ENCODE measurements at regions of chr4 and their contacts with region 1.

Region 1: GRCh38 chr4:185396724-185397402 is at the start of gene ANKRD37:
- DNase-seq: no peak
- H3K4me3 ChIP-seq: peak within 1 kb of the TSS; percentile 63 to 81 (median 81)
- H3K4me3 Mint-ChIP-seq: peak within 1 kb of the TSS; percentile 77 to 93
- H3K27ac ChIP-seq: peak within 1 kb of the TSS; percentile 88 to 96
- H3K27ac Mint-ChIP-seq: peak within 1 kb of the TSS; percentile 82 to 96 (median 94)
- H3K4me1 ChIP-seq: peaks cover 17 to 19% of the 10 kb centered on the region in 2 donors
- H3K4me1 Mint-ChIP-seq: peaks cover 18% of the 10 kb centered on the region
- H3K27me3 ChIP-seq: peaks cover 0 to 8% of the 10 kb centered on the region in 2 donors
- H3K27me3 Mint-ChIP-seq: peaks cover 11 to 13% (median 12%) of the 10 kb centered on the region in 3 donors
- CTCF ChIP-seq: no peak
- polyA plus RNA-seq, gene ANKRD37: 4.2 to 6.5 (median 5.4) TPM

Region 2: GRCh38 chr4:185425647-185426352 is 28.9 kb after region 1 on chr4 and contains the start of gene UFSP2:
- intact Hi-C with region 1: loop called in 1 of 2 experiments (anchors 1 kb)
- DNase-seq: peak; percentile 86 to 95 (median 93)
- H3K4me3 ChIP-seq: peak within 1 kb of the TSS; percentile 80 to 89 (median 80)
- H3K4me3 Mint-ChIP-seq: peak within 1 kb of the TSS; percentile 94 to 96
- H3K27ac ChIP-seq: peak within 1 kb of the TSS; percentile 65 to 97
- H3K27ac Mint-ChIP-seq: peak within 1 kb of the TSS; percentile 98 to 99 (median 99)
- H3K4me1 ChIP-seq: peaks cover 11 to 15% of the 10 kb centered on the region in 2 donors
- H3K4me1 Mint-ChIP-seq: peaks cover 16% of the 10 kb centered on the region
- H3K27me3 ChIP-seq: no peaks in the 10 kb centered on the region
- H3K27me3 Mint-ChIP-seq: peaks cover 8 to 28% (median 28%) of the 10 kb centered on the region in 3 donors
- CTCF ChIP-seq: no peak
- polyA plus RNA-seq, gene UFSP2: 6.8 to 23.5 (median 13.8) TPM